ENCODE measurements at regions of chrX and their contacts with region 1.

Region 1: DNA sequence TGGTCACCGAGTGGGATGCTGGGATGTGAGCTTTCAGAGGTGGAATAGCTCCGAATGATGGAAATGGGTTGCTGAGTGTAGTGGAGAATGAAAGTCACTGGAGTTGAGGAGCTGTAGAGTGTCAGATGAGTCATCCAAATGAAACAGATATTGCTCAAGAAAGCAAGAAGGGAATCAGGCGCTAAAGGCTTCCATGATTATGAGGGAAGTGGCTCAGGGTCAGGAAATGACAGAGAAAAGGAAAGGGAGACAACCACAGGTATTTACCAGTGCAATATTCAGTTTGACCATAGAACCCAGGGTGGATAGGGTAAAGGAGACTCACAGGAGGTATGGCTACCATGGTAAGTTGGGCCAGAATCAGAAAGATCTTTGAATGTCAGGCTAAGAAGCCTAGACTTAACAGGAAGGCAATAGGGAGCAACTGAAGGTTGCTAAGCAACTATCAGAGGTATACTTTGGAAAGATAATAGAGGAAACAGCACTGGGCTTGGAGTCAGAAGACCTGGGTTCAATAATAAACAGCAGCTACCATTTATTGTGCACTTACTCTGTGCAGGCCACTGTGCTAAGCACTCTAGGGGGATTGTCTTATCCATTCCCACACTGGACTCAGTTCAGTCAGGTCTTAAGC is 11.7 kb downstream of the LAS1L start:
- DNase-seq: no peak
- H3K4me3 ChIP-seq: no peak overlapping the region
- H3K4me1 ChIP-seq: no peaks in the 10 kb centered on the region
- H3K27me3 ChIP-seq: no peaks in the 10 kb centered on the region

Region 2: GRCh38 chrX:64205735-64206491 is 1316.9 kb before region 1 on chrX:
- in situ Hi-C with region 1: loop called (anchors 25 kb)
- DNase-seq: peak; percentile 87 to 97
- H3K4me3 ChIP-seq: peak overlapping the region; percentile 67
- H3K4me1 ChIP-seq: peaks cover 14% of the 10 kb centered on the region
- H3K27me3 ChIP-seq: no peaks in the 10 kb centered on the region

Region 3: DNA sequence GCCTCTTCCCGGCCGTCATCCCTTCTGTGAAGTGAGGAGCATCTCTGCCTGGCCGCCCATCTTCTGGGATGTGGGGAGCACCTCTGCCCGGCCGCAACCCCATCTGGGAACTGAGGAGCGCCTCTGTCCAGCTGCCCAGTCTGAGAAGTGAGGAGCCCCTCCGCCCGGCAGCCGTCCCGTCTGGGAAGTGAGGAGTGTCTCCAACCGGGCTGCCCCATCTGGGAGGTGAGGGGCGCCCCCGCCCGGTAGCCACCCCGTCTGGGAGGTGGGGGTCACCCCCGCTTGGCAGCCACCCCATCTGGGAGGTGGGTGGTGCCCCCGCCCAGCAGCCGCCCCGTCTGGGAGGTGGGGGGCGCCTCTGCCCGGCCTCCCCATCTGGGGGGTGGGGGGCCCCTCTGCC is 130.6 kb before region 1 on chrX:
- in situ Hi-C with region 1: no loop called
- DNase-seq: no peak
- H3K4me3 ChIP-seq: no peak overlapping the region
- H3K4me1 ChIP-seq: no peaks in the 10 kb centered on the region
- H3K27me3 ChIP-seq: no peaks in the 10 kb centered on the region

Region 4: DNA sequence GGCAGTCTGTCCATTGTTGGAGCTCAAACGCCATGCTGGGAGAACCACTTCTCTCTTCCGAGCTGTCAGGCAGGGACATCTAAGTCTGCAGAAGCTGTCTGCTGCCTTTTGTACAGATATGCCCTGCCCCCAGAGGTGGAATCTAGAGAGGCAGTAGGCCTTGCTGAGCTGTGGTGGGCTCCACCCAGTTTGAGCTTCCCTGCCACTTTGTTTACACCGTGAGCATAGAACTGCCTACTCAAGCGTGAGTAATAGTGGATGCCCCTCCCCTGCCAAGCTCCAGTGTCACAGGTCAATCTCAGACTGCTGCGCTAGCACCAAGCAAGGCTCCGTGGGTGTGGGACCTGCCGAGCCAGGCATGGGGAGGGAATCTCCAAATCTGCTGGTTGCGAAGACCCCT is 371.3 kb after region 1 on chrX:
- in situ Hi-C with region 1: no loop called
- DNase-seq: no peak
- H3K4me3 ChIP-seq: no peak overlapping the region
- H3K4me1 ChIP-seq: no peaks in the 10 kb centered on the region
- H3K27me3 ChIP-seq: no peaks in the 10 kb centered on the region